IMR-90 (cell line): ENCODE measurements at regions of chr1 and their contacts with region 1.

Region 1: GRCh38 chr1:176374967-176375569 is 87.9 kb upstream of the PAPPA2 start:
- DNase-seq: peak; percentile 62
- ATAC-seq: peak; percentile 94
- H3K4me3 ChIP-seq: no peak overlapping the region
- H3K27ac ChIP-seq: no peak overlapping the region
- H3K4me1 ChIP-seq: no peaks in the 10 kb centered on the region
- H3K27me3 ChIP-seq: no peaks in the 10 kb centered on the region
- CTCF ChIP-seq: peak; percentile 83
- POLR2A ChIP-seq: no peak
- RAD21 ChIP-seq: peak; percentile 71

Region 2: GRCh38 chr1:176691251-176692228 is 316.5 kb after region 1 on chr1:
- CTCF ChIA-PET with region 1: no interaction called
- POLR2A ChIA-PET with region 1: no interaction called
- dilution Hi-C with region 1: no loop called
- in situ Hi-C with region 1: no loop called
- intact Hi-C with region 1: loop called (anchors 1 kb)
- DNase-seq: peak; percentile 43
- ATAC-seq: peak; percentile 56
- H3K4me3 ChIP-seq: no peak overlapping the region
- H3K27ac ChIP-seq: no peak overlapping the region
- H3K4me1 ChIP-seq: no peaks in the 10 kb centered on the region
- H3K27me3 ChIP-seq: no peaks in the 10 kb centered on the region
- CTCF ChIP-seq: peak; percentile 58
- POLR2A ChIP-seq: no peak
- RAD21 ChIP-seq: peak; percentile 50

Region 3: GRCh38 chr1:176880954-176881595 is 506.0 kb after region 1 on chr1:
- CTCF ChIA-PET with region 1: no interaction called
- POLR2A ChIA-PET with region 1: no interaction called
- dilution Hi-C with region 1: no loop called
- in situ Hi-C with region 1: loop called (anchors 10 kb)
- intact Hi-C with region 1: loop called (anchors 1 kb)
- DNase-seq: peak; percentile 62
- ATAC-seq: peak; percentile 98
- H3K4me3 ChIP-seq: no peak overlapping the region
- H3K27ac ChIP-seq: no peak overlapping the region
- H3K4me1 ChIP-seq: no peaks in the 10 kb centered on the region
- H3K27me3 ChIP-seq: no peaks in the 10 kb centered on the region
- CTCF ChIP-seq: peak; percentile 73
- POLR2A ChIP-seq: no peak
- RAD21 ChIP-seq: peak; percentile 73

Region 4: DNA sequence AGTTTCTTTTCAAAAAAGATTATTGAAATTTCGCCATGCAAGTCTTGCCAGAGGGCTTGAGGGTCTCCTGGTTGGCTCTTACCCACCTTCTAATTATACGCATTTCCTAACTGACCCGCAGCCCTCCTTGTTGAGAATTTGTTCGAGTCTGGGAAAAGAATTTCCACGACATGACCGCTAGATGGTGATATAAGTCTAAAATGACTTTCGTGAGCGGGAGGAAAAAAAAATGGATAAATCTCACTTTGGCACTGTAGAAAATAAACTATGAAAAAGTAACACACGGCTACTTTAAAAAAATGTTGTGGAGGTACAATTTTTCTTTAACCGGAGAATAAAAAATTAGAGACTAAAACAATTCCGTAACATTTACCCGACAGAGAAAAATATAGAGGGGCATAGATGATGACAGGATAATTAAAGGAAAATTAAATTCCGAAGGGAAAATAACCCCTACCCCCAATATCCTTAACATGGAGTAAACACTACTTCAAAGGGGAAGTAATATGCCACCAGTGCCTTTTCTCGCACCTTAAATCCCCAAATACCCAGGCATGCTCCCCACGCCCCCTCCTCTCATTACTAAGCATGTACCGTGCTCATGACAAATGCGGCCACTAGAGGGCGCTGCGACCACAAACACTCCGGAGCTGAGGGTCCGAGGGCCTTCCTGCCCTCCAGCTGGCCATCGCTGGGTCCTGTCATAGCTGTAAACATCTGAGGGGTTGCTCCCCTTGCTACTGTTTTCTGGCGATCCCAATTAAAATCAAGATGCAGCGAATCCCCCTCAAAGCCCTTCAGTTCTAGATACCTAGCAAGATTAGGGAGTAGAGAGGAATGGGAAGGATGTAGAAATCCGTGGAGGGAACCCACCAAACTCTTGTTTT is 522.5 kb after region 1 on chr1:
- CTCF ChIA-PET with region 1: no interaction called
- POLR2A ChIA-PET with region 1: no interaction called
- dilution Hi-C with region 1: no loop called
- in situ Hi-C with region 1: no loop called
- intact Hi-C with region 1: no loop called
- DNase-seq: peak; percentile 61
- ATAC-seq: peak; percentile 91
- H3K4me3 ChIP-seq: no peak overlapping the region
- H3K27ac ChIP-seq: no peak overlapping the region
- H3K4me1 ChIP-seq: no peaks in the 10 kb centered on the region
- H3K27me3 ChIP-seq: no peaks in the 10 kb centered on the region
- CTCF ChIP-seq: peak; percentile 77
- POLR2A ChIP-seq: no peak
- RAD21 ChIP-seq: peak; percentile 77